ENCODE measurements at regions of chr13 and their contacts with region 1.

Region 1: DNA sequence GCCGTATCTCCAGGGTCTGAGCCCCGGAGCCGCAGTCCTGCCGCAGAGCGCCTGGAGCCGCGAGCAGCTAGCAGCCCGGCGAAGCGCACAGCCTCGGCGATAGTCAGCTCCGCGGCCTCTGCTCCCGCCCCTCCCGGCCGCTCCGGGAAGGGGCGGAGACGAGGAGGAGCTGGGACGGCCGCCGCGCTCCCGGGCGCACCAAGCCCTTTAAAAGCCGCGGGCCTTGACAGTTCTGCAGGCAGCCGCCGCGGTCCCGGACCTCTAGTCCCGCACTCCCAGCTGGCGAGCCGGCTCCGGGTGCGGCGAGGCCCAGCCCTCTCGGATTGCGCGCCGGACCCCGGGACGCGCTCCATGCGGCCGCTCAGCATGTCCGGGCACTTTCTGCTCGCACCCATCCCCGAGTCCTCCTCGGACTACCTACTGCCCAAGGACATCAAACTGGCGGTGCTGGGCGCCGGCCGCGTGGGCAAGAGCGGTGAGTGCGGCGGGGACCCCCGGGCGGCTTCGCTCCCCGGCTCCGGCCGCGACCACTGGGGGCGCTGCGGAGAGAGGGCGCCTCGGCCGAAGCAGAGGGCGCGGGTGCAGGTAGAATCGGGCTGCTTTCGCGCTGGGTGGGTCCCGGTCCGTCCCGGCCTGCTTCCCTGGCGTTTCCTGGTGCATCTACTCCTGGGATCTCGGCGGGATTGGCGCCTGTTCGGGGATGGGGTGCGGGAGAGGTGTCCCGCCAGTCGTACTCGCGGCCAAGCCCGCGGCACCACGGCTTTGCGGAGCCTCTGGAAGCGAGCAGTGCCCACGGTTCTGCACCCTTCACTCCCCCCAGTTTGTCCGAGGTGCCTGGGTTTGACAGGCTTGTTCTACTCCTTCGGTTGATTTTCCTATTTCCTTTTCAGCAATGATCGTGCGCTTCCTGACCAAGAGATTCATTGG is at the start of gene RASL11A:
- DNase-seq: peak; percentile 87
- CTCF ChIP-seq: peak; percentile 77

Region 2: DNA sequence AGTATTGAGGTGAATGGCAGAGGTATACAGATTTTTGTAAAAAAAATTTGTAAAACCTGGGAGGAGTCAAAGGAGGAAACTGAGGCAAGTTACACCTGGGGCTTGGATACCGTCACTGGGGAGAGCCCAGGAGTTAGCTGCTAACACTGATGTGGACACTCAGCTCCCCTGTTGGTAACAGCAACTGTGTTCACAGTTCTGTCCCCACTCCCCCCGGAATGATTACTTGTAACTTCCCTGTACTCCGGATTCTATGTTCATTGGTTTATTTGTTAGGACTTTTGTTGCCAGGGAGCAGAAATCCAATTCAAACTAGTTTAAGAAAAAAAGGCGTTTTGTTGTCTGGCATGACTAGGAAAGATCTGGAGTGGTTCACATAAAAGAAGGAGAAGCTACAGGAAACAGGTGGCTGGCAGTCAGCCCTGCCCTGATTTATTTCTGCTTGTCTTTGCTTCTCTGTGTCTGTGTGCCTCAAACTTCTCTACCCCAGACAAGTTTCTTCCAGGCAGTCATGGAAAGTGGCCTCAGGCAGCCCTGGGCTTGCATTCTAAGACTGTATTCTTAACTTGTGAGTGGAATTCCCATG is 508.0 kb before region 1 on chr13:
- CTCF ChIA-PET with region 1: no interaction called
- POLR2A ChIA-PET with region 1: no interaction called
- DNase-seq: no peak
- CTCF ChIP-seq: no peak

Region 3: GRCh38 chr13:27186295-27186694 is 84.6 kb before region 1 on chr13:
- CTCF ChIA-PET with region 1: no interaction called
- POLR2A ChIA-PET with region 1: no interaction called
- DNase-seq: no peak
- CTCF ChIP-seq: no peak

Region 4: GRCh38 chr13:27257648-27258253 is 13.1 kb before region 1 on chr13:
- CTCF ChIA-PET with region 1: interaction called, 11 read pairs
- POLR2A ChIA-PET with region 1: interaction called, 3 read pairs
- DNase-seq: no peak
- CTCF ChIP-seq: no peak

Region 5: GRCh38 chr13:27283906-27284493 is 13.1 kb after region 1 on chr13:
- CTCF ChIA-PET with region 1: interaction called, 12 read pairs
- POLR2A ChIA-PET with region 1: no interaction called
- DNase-seq: no peak
- CTCF ChIP-seq: peak; percentile 41